Heart left ventricle (tissue), 16 donors: ENCODE measurements at regions of chr3 and their contacts with region 1.

Region 1: DNA sequence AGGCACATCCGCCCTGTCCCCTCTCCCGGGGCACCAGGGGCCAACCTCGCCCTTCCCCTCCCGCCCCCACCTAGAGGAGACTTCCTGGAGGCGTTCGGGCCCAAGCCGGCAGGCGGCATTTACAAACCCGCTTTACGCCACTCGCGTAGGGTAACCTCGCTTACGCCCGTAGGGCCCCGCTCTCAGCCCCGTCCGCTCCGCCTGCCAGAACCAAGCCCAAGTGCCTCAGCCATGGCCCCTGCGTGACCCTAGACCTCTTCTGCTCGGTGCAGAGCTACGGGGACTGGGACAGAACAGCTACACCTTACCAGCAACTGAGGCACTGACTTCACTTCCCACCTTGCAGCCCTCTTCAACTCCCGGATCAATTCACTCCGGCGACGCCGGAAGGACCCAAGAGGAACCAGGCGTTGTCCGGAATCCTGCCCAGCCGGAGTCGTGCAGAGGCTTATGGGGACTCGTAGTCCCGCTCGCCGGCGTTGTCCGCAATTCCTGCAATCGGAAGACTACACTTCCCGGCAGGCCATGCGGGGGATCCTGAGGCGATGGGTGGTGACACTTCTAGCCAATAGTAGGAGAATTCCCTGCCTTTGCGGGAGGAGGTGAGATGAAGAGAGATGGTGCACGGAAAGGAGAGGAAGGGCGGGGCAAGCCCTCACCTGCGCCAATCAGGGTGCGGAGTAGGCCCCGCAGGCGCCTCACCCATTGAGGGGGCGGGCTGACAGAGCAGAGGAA is at the start of gene PDCD10:
- DNase-seq: peak; percentile 98 to 99 (median 98)
- ATAC-seq: peak; percentile 96 to 97 (median 96)
- H3K4me3 ChIP-seq: peak within 1 kb of the TSS; percentile 72 to 94 (median 84)
- H3K27ac ChIP-seq: peak within 1 kb of the TSS; percentile 81 to 95 (median 93)
- H3K4me1 ChIP-seq: peaks cover 4 to 55% (median 33%) of the 10 kb centered on the region in 12 donors
- H3K27me3 ChIP-seq: no peaks in the 10 kb centered on the region
- CTCF ChIP-seq: no peak
- POLR2A ChIP-seq: peak in 1 of 2 donors; percentile 71
- total RNA-seq, gene PDCD10: 32.1 to 53.9 (median 41.1) TPM

Region 2: GRCh38 chr3:167615030-167615429 is 119.6 kb before region 1 on chr3:
- intact Hi-C with region 1: no loop called
- DNase-seq: no peak
- ATAC-seq: no peak
- H3K4me3 ChIP-seq: no peak overlapping the region
- H3K27ac ChIP-seq: no peak overlapping the region
- H3K4me1 ChIP-seq: no peaks in the 10 kb centered on the region
- H3K27me3 ChIP-seq: no peaks in the 10 kb centered on the region
- CTCF ChIP-seq: no peak
- POLR2A ChIP-seq: no peak

Region 3: DNA sequence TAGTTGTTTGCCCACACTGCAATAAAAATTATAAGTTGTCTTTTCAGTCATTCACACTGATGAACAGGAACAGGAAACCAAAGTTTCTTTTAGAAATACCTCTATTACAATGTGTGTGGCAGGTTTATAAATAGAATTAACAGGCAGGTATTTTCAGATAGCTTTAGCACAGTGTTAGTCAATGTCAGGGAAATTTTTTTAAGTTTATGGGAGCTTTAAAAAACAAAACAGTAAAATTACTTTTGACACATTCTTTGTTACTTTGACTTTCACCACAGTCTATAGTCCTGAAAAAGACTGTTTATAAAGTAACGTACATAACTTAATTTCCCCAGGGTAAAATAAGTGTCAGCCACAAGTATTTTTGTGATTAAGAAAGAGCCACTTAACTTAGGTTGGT is 38.9 kb after region 1 on chr3:
- intact Hi-C with region 1: no loop called
- DNase-seq: no peak
- ATAC-seq: no peak
- H3K4me3 ChIP-seq: no peak overlapping the region
- H3K27ac ChIP-seq: no peak overlapping the region
- H3K4me1 ChIP-seq: no peaks in the 10 kb centered on the region
- H3K27me3 ChIP-seq: no peaks in the 10 kb centered on the region
- CTCF ChIP-seq: no peak
- POLR2A ChIP-seq: no peak

Region 4: GRCh38 chr3:167808910-167809309 is 74.2 kb after region 1 on chr3:
- intact Hi-C with region 1: loop called in 6 of 10 experiments (anchors 2 to 10 kb)
- DNase-seq: no peak
- ATAC-seq: no peak
- H3K4me3 ChIP-seq: peak overlapping the region in 4 of 12 donors; percentile 3 to 30 (median 20)
- H3K27ac ChIP-seq: peak overlapping the region in 1 of 12 donors; percentile 16
- H3K4me1 ChIP-seq: peaks cover 3 to 25% (median 12%) of the 10 kb centered on the region in 12 donors
- H3K27me3 ChIP-seq: no peaks in the 10 kb centered on the region
- CTCF ChIP-seq: no peak
- POLR2A ChIP-seq: no peak

Region 5: DNA sequence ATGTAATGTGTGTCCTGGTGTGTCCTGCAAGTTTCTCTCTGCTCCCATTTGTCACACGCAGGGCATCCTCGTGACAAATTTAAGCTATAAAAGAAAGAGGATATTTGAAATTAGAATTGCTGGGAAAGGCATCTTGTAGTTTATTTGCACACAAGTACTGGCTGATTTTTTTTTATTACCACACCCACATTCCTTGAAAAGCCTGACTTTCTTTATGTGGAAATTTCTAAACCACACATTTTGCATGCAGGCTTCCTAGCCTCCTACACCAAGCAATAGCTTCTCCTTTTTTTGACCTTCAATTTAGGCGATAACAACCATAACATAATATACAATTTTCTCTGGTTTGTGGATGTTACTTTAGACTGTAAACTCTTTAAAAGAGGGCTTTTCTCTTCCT is 127.0 kb after region 1 on chr3:
- intact Hi-C with region 1: loop called in 5 of 10 experiments (anchors 5 to 10 kb)
- DNase-seq: no peak
- ATAC-seq: no peak
- H3K4me3 ChIP-seq: no peak overlapping the region
- H3K27ac ChIP-seq: peak overlapping the region in 7 of 12 donors; percentile 28 to 90 (median 55)
- H3K4me1 ChIP-seq: peaks cover 0 to 53% (median 17%) of the 10 kb centered on the region in 12 donors
- H3K27me3 ChIP-seq: no peaks in the 10 kb centered on the region
- CTCF ChIP-seq: no peak
- POLR2A ChIP-seq: no peak

Region 6: GRCh38 chr3:168034152-168034928 is 299.7 kb after region 1 on chr3:
- intact Hi-C with region 1: loop called in 1 of 10 experiments (anchors 10 kb)
- DNase-seq: peak in 2 of 5 donors; percentile 41 to 51
- ATAC-seq: peak; percentile 65 to 90 (median 88)
- H3K4me3 ChIP-seq: no peak overlapping the region
- H3K27ac ChIP-seq: peak overlapping the region; percentile 19 to 83 (median 66)
- H3K4me1 ChIP-seq: peaks cover 0 to 14% (median 8%) of the 10 kb centered on the region in 12 donors
- H3K27me3 ChIP-seq: no peaks in the 10 kb centered on the region
- CTCF ChIP-seq: no peak
- POLR2A ChIP-seq: no peak

Region 7: GRCh38 chr3:168095611-168096209 is 361.0 kb after region 1 on chr3 and contains the start of gene GOLIM4:
- intact Hi-C with region 1: loop called in 1 of 10 experiments (anchors 10 kb)
- DNase-seq: peak; percentile 97 to 99 (median 97)
- ATAC-seq: peak; percentile 95 to 97 (median 96)
- H3K4me3 ChIP-seq: peak within 1 kb of the TSS; percentile 50 to 93 (median 80)
- H3K27ac ChIP-seq: peak within 1 kb of the TSS; percentile 92 to 99 (median 97)
- H3K4me1 ChIP-seq: peaks cover 0 to 45% (median 33%) of the 10 kb centered on the region in 12 donors
- H3K27me3 ChIP-seq: no peaks in the 10 kb centered on the region
- CTCF ChIP-seq: peak in 6 of 12 donors; percentile 8 to 44 (median 24)
- POLR2A ChIP-seq: peak; percentile 70 to 93
- total RNA-seq, gene GOLIM4: 61.7 to 106 (median 66.3) TPM

Region 8: GRCh38 chr3:168239287-168239686 is 504.6 kb after region 1 on chr3:
- intact Hi-C with region 1: no loop called
- DNase-seq: no peak
- ATAC-seq: no peak
- H3K4me3 ChIP-seq: no peak overlapping the region
- H3K27ac ChIP-seq: no peak overlapping the region
- H3K4me1 ChIP-seq: no peaks in the 10 kb centered on the region
- H3K27me3 ChIP-seq: peaks cover 0 to 36% (median 2%) of the 10 kb centered on the region in 9 donors
- CTCF ChIP-seq: no peak
- POLR2A ChIP-seq: no peak